ENCODE measurements at regions of chr22 and their contacts with region 1.

Region 1: DNA sequence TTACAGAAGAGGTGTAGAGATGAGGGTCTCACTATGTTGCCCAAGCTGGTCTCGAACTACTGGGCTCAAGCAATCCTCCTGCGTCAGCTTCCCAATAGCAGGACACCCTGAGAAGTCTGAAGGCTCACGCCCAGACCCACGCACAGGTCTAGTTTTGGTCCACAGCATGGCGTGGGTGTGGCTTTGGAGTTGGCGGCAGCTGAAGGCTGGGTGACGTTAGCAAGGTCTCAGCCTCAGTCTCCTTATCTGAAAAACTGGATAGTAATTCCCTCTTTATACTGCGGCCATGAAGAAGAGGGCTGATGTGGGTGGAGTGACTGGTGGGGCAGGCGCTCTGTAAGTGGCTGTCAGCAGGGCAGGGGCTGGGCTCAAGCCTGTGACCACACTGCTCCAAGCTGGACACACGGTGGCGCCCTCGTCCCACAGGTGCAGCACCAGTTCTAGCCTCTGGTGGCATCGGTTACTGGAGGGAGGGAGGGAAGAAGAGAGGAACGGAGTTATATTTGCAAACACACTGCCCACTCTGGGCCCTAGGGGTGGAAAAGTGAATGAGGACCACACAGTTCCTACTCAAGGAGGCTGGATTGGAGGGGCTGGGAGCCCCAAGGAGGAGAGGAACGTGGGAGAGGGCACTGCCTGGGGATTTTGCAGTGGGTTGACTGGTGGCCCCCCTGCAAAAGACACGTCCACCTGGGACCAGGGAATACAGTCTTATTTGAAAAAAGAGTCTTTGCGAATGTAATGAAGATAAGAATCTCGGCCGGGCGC is 19.6 kb upstream of the CARD10 start:
- DNase-seq: peak; percentile 80
- H3K27ac ChIP-seq: peak overlapping the region; percentile 29
- CTCF ChIP-seq: peak; percentile 93

Region 2: DNA sequence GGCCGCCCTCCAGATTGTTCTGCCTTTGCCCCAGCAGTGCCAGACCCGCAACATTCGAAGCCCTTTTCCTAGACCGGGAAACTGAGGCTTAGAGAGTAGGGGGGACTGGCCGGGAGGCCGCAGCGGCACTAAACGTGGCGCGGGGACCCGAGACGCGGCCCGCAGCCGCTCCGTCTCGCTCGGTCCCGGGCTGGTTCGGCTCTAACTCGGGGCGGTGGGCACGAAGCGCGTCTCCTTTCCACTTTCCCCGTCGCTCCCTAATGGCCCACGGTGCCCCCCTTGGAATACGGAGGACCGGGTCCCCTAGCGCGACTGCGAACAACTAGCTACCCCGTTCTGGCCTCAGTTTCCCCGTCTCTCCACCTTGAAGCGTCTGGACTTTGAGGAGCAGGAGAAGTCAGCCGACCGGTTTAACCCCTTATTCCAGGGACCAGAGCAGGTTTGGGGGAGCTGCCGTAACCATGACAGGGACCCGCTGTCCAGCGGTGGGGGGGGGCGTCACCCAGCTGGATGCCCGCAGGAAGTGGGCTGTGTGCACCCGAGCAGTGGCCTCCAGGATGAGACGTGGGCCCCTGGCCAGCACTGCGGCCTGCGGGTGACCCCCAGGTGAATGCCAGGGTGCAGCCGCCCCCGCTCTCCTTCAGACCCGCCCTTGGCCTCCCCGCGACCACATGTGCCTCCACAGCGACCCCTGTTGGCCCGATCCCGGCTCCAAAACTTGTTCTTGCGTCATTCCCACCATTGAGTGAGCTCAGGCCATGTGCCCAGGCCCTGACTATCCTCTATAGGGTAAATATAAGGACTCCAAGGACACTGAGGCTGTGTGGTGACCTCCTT is 22.7 kb after region 1 on chr22:
- CTCF ChIA-PET with region 1: interaction called, 38 read pairs
- POLR2A ChIA-PET with region 1: no interaction called
- DNase-seq: peak; percentile 77
- H3K27ac ChIP-seq: peak overlapping the region; percentile 94
- CTCF ChIP-seq: peak; percentile 85

Region 3: DNA sequence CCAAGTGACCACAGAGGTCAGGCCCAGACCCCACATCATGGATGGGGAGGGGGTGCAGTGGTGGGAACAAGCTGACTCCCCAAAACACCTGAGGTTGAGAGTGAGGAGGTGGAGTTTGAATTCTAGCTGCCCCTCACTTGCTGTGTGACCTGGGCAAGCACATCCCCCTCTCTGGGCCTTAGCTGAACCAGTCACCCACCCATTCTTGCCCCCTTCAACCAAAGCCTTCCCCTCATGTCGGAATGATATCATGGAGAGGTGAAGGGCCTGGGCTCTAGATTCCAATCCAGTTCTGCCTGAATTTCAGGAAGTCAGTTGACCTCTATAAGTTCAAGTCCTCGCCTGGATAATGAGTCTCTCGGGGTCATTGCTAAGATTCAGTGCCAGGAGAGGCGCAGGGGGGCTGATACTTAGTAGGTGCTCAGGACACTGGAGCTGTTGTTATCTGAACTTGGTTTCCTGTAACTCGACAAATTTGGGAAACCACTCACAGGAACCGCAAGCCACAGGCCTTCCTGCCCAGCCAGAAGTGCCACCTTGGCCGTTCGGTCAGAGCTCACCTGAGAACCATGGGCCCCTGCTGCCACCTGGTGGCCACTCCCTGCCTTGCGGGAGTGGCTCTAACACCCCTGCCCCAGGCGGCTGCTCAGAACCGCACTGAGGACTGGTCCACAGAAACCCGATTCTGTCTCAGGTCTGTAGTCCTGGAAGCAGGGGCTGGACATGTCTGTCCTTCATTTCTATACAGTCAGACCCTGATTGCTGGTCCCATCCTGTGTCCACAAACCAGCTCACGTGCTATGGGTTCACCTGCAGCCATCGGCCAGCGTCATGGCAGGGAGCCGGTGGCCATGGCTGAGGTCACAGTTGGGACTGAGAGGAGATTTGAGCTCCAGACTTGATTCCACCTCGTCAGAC is 28.4 kb after region 1 on chr22:
- CTCF ChIA-PET with region 1: interaction called, 38 read pairs
- POLR2A ChIA-PET with region 1: no interaction called
- DNase-seq: no peak
- H3K27ac ChIP-seq: peak overlapping the region; percentile 66
- CTCF ChIP-seq: peak; percentile 90

Region 4: DNA sequence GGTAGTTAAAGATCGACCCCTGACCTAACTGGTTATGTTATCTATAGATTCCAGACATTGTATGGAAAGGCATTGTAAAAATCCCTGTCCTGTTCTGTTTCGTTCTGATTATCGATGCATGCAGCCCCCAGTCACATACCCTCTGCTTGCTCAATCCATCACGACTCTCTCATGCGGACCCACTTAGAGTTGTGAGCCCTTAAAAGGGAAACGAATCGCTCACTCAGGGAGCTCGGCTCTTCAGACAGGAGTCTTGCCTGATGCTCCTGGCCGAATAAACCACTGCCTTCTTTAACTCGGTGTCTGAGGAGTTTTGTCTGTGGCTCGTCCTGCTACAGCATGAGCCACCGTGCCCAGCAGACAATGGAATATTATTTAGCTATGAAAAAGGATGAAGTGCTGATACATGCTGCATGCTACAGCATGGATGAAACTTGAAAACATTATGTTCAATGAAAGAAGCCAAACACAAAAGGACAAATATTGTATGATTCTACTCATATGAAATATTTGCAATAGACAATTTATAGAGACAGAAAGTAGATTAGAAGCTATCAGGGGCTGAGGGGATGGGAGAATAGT is 53.1 kb after region 1 on chr22:
- CTCF ChIA-PET with region 1: interaction called, 11 read pairs
- POLR2A ChIA-PET with region 1: no interaction called
- DNase-seq: no peak
- H3K27ac ChIP-seq: no peak overlapping the region
- CTCF ChIP-seq: no peak